T-cell (primary cell): ENCODE measurements at regions of chr9 and their contacts with region 1.

Region 1: DNA sequence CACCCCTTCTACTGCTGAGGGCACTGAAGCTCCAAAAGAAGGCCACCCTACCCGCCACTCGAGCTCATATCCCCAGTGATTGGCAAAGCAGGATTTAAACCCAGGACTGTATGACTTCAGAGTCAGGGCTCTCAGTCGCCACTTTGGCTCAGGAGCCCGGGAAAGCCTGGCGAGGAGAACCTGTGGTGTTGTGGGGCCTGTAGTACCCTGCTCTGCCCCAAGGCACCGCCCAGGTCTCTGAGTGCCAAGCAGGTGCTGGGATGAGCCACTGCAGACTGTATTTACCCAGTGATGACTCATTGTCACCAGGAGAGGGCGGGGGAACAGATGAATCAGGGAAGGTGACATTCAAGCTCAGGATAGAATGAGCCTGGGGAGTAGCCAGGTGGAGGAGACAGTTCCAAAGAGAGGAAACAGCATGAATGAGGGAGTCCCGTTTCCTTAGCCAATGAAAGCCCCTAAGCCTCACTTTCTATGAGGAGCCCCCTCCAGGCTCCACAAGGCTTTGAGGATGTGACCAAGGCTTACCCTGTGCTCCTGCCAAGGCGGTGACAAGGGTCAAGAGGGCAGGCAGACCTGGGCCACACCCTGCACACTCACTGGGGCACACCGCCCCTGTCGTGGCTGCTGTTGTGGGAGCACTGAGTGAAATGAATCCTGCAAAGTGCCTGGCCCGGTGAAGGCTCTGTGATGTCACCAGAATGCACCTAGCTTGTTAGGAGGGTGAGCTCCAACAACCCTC is 17.8 kb upstream of the DPM2 start:
- DNase-seq: peak; percentile 47 to 85 (median 70)
- ATAC-seq: peak; percentile 83 to 90 (median 86)
- H3K4me3 ChIP-seq: peak overlapping the region; percentile 4 to 54
- H3K4me3 Mint-ChIP-seq: peak overlapping the region; percentile 67 to 81 (median 74)
- H3K27ac ChIP-seq: peak overlapping the region; percentile 44
- H3K27ac Mint-ChIP-seq: peak overlapping the region; percentile 87 to 94
- H3K4me1 ChIP-seq: peaks cover 66 to 85% of the 10 kb centered on the region in 2 experiments
- H3K4me1 Mint-ChIP-seq: peaks cover 90 to 96% (median 95%) of the 10 kb centered on the region in 3 donors
- H3K27me3 ChIP-seq: no peaks in the 10 kb centered on the region
- H3K27me3 Mint-ChIP-seq: no peaks in the 10 kb centered on the region

Region 2: DNA sequence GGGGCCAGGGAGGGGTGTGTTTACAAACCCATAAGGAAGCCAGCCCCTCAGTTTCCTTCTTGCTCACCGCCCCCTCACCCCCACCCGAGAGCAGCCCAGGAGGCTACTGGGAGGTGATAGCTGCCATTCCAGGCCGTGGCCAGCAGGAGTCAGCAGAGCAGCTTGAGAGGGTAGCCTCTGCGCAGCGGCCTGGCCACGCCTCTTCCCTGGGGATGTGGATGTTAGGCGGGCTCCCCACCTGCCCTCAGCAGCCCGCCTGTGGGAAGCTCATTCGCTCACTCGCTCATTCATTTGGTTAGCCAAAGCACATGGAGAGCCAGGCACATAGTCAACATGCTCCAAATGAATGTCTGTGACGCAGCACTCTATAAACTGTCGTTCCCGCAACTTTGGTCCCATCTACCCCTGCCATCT is 11.7 kb before region 1 on chr9:
- CTCF ChIA-PET with region 1: interaction called, 3 to 11 read pairs
- POLR2A ChIA-PET with region 1: no interaction called
- DNase-seq: peak; percentile 47 to 86 (median 67)
- ATAC-seq: peak; percentile 69 to 77 (median 69)
- H3K4me3 ChIP-seq: no peak overlapping the region
- H3K4me3 Mint-ChIP-seq: peak overlapping the region in 1 of 3 donors; percentile 3
- H3K27ac ChIP-seq: peak overlapping the region; percentile 16
- H3K27ac Mint-ChIP-seq: peak overlapping the region; percentile 74 to 78
- H3K4me1 ChIP-seq: peaks cover 2 to 62% of the 10 kb centered on the region in 2 experiments
- H3K4me1 Mint-ChIP-seq: peaks cover 44 to 52% (median 50%) of the 10 kb centered on the region in 3 donors
- H3K27me3 ChIP-seq: no peaks in the 10 kb centered on the region
- H3K27me3 Mint-ChIP-seq: no peaks in the 10 kb centered on the region

Region 3: GRCh38 chr9:127968036-127968435 is 12.6 kb after region 1 on chr9:
- CTCF ChIA-PET with region 1: interaction called in 1 of 2 experiments, 4 read pairs
- POLR2A ChIA-PET with region 1: interaction called in 1 of 2 experiments, 11 read pairs
- DNase-seq: peak in 1 of 35 experiments; percentile 56
- ATAC-seq: no peak
- H3K4me3 ChIP-seq: peak overlapping the region in 1 of 2 donors; percentile 0
- H3K4me3 Mint-ChIP-seq: peak overlapping the region; percentile 91 to 97 (median 96)
- H3K27ac ChIP-seq: peak overlapping the region; percentile 79
- H3K27ac Mint-ChIP-seq: peak overlapping the region; percentile 88 to 99
- H3K4me1 ChIP-seq: peaks cover 64 to 99% of the 10 kb centered on the region in 2 experiments
- H3K4me1 Mint-ChIP-seq: peaks cover 96 to 97% (median 97%) of the 10 kb centered on the region in 3 donors
- H3K27me3 ChIP-seq: no peaks in the 10 kb centered on the region
- H3K27me3 Mint-ChIP-seq: no peaks in the 10 kb centered on the region

Region 4: GRCh38 chr9:128231638-128232527 is 276.4 kb after region 1 on chr9:
- CTCF ChIA-PET with region 1: no interaction called
- POLR2A ChIA-PET with region 1: no interaction called
- DNase-seq: no peak
- ATAC-seq: no peak
- H3K4me3 ChIP-seq: no peak overlapping the region
- H3K4me3 Mint-ChIP-seq: no peak overlapping the region
- H3K27ac ChIP-seq: no peak overlapping the region
- H3K27ac Mint-ChIP-seq: no peak overlapping the region
- H3K4me1 ChIP-seq: no peaks in the 10 kb centered on the region
- H3K4me1 Mint-ChIP-seq: no peaks in the 10 kb centered on the region
- H3K27me3 ChIP-seq: peaks cover 0 to 12% of the 10 kb centered on the region in 2 experiments
- H3K27me3 Mint-ChIP-seq: peaks cover 0 to 5% of the 10 kb centered on the region in 2 donors